H1 (cell line): ENCODE measurements at regions of chr12 and their contacts with region 1.

Region 1: GRCh38 chr12:50504798-50505385 is at the start of gene DIP2B:
- DNase-seq: peak; percentile 61 to 98
- H3K4me3 ChIP-seq: peak within 1 kb of the TSS; percentile 46 to 94 (median 92)
- H3K27ac ChIP-seq: peak within 1 kb of the TSS; percentile 84
- H3K4me1 ChIP-seq: peaks cover 0 to 4% (median 2%) of the 10 kb centered on the region in 4 experiments; a peak in 3 of 7 replicates
- H3K27me3 ChIP-seq: no peaks in the 10 kb centered on the region
- CTCF ChIP-seq: peak; percentile 85 to 99 (median 93)
- EP300 ChIP-seq: peak in 1 of 2 experiments; percentile 80; a peak in 1 of 3 replicates
- POLR2A ChIP-seq: peak; percentile 36 to 66
- RAD21 ChIP-seq: peak; percentile 97
- total RNA-seq, gene DIP2B: 26.8 and 29.6 TPM in 2 replicates

Region 2: DNA sequence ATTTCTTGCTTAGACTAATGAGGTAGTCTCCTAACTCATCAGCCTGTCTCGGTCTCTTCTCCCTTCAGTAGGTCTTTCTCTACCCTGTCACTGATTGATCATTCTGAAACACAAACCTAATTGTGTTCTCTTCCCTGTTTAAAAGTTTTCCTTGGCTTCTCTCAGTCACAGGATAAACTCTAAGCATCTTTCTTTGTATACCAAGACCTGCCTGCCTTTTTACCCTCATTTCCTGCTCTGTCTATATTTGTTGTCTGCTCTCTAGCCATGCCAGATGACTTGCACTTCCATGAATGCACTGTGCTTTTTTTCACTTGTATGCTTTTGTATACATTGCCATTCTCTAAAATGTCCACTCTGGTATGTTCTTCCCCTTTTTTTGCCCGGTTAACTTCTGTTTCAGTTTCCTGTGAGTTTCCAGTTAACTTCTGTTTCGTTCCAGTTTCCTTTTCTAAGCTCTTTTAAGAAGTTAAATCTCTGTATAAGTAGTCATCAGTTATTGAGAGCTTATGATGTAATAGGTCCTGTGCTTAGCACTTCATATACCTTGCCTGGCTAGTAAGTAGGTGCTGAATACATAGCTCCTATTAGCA is 12.7 kb after region 1 on chr12:
- CTCF ChIA-PET with region 1: interaction called, 8 read pairs
- POLR2A ChIA-PET with region 1: interaction called, 11 read pairs
- DNase-seq: no peak
- H3K4me3 ChIP-seq: no peak overlapping the region
- H3K27ac ChIP-seq: no peak overlapping the region
- H3K4me1 ChIP-seq: no peaks in the 10 kb centered on the region
- H3K27me3 ChIP-seq: no peaks in the 10 kb centered on the region
- CTCF ChIP-seq: no peak
- EP300 ChIP-seq: no peak
- POLR2A ChIP-seq: no peak
- RAD21 ChIP-seq: no peak

Region 3: GRCh38 chr12:50637870-50638481 is 133.1 kb after region 1 on chr12:
- CTCF ChIA-PET with region 1: interaction called, 99 read pairs
- POLR2A ChIA-PET with region 1: interaction called, 11 read pairs
- DNase-seq: no peak
- H3K4me3 ChIP-seq: no peak overlapping the region
- H3K27ac ChIP-seq: no peak overlapping the region
- H3K4me1 ChIP-seq: no peaks in the 10 kb centered on the region
- H3K27me3 ChIP-seq: no peaks in the 10 kb centered on the region
- CTCF ChIP-seq: peak in 2 of 3 experiments; percentile 19 to 35; a peak in 2 of 4 replicates
- EP300 ChIP-seq: no peak
- POLR2A ChIP-seq: no peak
- RAD21 ChIP-seq: peak; percentile 59 to 63

Region 4: GRCh38 chr12:50665139-50665538 is 160.2 kb after region 1 on chr12:
- CTCF ChIA-PET with region 1: interaction called, 11 read pairs
- POLR2A ChIA-PET with region 1: interaction called, 3 read pairs
- DNase-seq: no peak
- H3K4me3 ChIP-seq: no peak overlapping the region
- H3K27ac ChIP-seq: no peak overlapping the region
- H3K4me1 ChIP-seq: no peaks in the 10 kb centered on the region
- H3K27me3 ChIP-seq: no peaks in the 10 kb centered on the region
- CTCF ChIP-seq: no peak
- EP300 ChIP-seq: no peak
- POLR2A ChIP-seq: no peak
- RAD21 ChIP-seq: no peak

Region 5: GRCh38 chr12:50799908-50800307 is 295.0 kb after region 1 on chr12:
- CTCF ChIA-PET with region 1: no interaction called
- POLR2A ChIA-PET with region 1: no interaction called
- DNase-seq: no peak
- H3K4me3 ChIP-seq: no peak overlapping the region
- H3K27ac ChIP-seq: no peak overlapping the region
- H3K4me1 ChIP-seq: no peaks in the 10 kb centered on the region
- H3K27me3 ChIP-seq: no peaks in the 10 kb centered on the region
- CTCF ChIP-seq: no peak
- EP300 ChIP-seq: no peak
- POLR2A ChIP-seq: no peak
- RAD21 ChIP-seq: no peak